HCT116 (cell line): ENCODE measurements at regions of chr18 and their contacts with region 1.

Region 1: DNA sequence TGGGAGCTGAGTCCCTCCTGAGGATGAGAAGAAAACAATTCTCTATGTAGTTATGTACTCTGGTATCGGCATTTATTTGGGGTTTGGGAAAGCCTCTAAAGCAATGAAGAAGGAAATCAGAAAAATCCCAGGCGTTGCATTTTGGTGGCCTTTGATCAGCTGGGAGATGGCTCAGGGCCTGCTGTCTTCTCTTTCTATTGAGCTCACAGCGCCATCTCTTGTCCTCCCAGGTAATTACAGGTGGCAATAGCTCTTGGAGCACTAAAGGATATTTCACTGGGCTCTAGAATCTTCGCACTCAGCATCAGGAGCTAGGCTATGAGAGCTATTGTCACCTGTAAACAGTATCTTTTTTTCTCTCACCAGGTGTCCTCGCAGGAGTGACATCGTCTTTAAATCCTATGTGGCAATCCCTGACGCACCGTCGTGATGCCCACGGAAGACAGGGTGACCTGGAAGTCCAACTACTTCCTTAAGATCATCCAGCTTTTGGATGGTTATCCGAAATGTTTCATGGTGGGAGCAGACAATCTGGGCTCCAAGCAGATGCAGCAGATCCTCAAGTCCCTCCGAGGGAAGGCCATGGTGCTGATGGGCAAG is 76.1 kb upstream of the PMAIP1 start:
- DNase-seq: peak; percentile 67
- ATAC-seq: peak; percentile 97
- H3K4me3 ChIP-seq: no peak overlapping the region
- H3K27ac ChIP-seq: no peak overlapping the region
- H3K4me1 ChIP-seq: no peaks in the 10 kb centered on the region
- H3K27me3 ChIP-seq: no peaks in the 10 kb centered on the region
- CTCF ChIP-seq: peak; percentile 81 to 89 (median 82)
- POLR2A ChIP-seq: no peak
- RAD21 ChIP-seq: peak; percentile 91

Region 2: DNA sequence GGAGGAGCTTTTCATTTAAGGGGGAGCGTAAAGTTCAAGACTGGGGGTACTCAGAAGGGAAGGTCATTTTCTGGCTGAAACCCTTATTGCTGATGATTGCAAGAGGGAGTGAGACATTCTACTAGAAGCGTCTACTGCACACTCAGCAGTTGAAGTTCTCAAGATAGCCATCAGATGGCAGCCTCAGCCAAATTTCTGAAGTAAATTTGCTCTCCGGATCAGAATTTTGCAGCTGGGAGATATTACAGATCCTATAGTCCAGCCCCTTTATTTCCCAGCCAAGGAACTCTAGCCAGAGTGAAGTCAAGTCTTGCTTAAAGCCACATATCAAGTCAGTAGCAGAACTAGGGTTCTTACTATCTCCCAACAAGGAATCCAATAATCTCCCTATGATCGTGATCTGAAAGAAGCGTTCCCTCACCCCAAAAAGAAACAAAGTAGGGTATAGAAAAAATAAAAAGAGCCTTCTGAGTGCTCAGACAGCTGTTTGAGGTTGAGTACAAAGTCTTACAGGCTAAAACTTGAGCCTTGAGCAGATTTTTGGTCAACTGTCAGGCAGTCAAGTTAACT is 574.4 kb before region 1 on chr18:
- CTCF ChIA-PET with region 1: interaction called, 11 read pairs
- POLR2A ChIA-PET with region 1: no interaction called
- RAD21 ChIA-PET with region 1: no interaction called
- intact Hi-C with region 1: loop called (anchors 1 kb)
- DNase-seq: peak; percentile 75
- ATAC-seq: peak; percentile 94
- H3K4me3 ChIP-seq: no peak overlapping the region
- H3K27ac ChIP-seq: no peak overlapping the region
- H3K4me1 ChIP-seq: no peaks in the 10 kb centered on the region
- H3K27me3 ChIP-seq: peaks cover 45% of the 10 kb centered on the region
- CTCF ChIP-seq: peak; percentile 72 to 81 (median 73)
- POLR2A ChIP-seq: no peak
- RAD21 ChIP-seq: peak; percentile 74

Region 3: DNA sequence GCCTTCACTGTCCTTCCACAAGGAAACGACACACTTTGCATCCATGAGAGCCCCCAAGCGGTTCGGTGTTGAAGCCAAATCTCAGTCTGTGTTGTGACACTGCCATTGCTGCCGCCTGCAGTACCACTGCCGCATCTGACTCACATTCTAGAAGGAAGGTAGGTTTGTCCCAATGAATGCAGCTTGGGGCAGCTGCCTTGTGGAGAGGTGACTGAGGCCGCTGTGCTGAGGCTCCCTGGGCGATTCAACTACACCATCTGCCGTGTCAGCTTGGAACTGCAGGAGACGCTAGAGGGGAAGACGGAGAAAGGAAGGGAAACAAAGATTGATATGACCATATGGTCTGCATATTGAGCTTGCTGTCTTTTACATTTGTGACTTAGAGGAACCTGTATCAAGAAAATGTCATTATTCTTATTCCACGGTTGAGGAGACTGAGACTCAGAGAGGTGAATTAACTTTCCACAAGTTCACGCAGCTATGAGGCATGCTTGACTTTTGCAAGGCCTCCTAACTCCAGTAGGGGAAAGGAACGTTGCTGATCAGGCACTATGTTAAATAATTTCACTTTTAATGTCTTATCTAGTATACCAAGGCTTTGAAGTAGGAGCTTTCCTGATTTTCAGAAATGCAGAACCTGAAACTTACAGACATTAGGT is 421.1 kb before region 1 on chr18:
- CTCF ChIA-PET with region 1: interaction called, 24 read pairs
- POLR2A ChIA-PET with region 1: no interaction called
- RAD21 ChIA-PET with region 1: interaction called in 1 of 2 experiments, 5 read pairs
- intact Hi-C with region 1: no loop called
- DNase-seq: peak; percentile 94
- ATAC-seq: peak; percentile 100
- H3K4me3 ChIP-seq: no peak overlapping the region
- H3K27ac ChIP-seq: no peak overlapping the region
- H3K4me1 ChIP-seq: no peaks in the 10 kb centered on the region
- H3K27me3 ChIP-seq: no peaks in the 10 kb centered on the region
- CTCF ChIP-seq: peak; percentile 90 to 99 (median 99)
- POLR2A ChIP-seq: no peak
- RAD21 ChIP-seq: peak; percentile 100

Region 4: DNA sequence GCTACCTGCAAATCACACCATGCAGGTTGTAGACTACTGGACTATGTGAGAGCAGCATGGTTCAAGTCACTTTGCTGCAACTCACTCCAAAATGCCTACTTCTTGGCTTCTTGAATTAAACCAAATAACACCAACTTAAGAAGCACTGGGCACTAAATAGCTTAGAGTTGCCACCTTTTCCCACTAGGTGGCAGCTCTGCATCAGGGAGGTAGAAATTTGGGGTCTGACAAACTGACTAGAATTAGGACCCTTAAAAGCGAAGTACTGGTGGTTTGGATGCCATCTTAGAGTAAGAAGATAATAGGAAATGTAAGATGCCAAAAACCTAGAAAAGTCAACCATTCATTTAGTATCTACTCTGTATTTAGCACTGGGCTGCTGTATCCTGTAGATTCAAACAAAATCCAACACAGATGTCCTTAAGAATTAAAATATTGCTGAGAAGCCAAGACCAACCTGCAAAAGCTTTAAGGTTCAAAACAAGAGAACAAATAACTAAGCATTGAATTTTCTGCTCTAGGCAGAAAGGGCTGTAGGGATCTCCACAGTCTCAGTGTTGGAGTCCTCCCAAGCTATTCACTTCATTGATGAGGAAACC is 192.0 kb before region 1 on chr18:
- CTCF ChIA-PET with region 1: interaction called, 145 read pairs
- POLR2A ChIA-PET with region 1: interaction called, 7 read pairs
- RAD21 ChIA-PET with region 1: interaction called, 19 to 28 read pairs
- intact Hi-C with region 1: loop called (anchors 1 kb)
- DNase-seq: peak; percentile 24
- ATAC-seq: peak; percentile 69
- H3K4me3 ChIP-seq: no peak overlapping the region
- H3K27ac ChIP-seq: no peak overlapping the region
- H3K4me1 ChIP-seq: no peaks in the 10 kb centered on the region
- H3K27me3 ChIP-seq: peaks cover 30% of the 10 kb centered on the region; the same call in 1 of the 2 replicates
- CTCF ChIP-seq: peak; percentile 53 to 86 (median 72); a peak in 5 of 6 replicates
- POLR2A ChIP-seq: no peak
- RAD21 ChIP-seq: peak; percentile 74

Region 5: GRCh38 chr18:59783138-59783537 is 40.6 kb before region 1 on chr18:
- CTCF ChIA-PET with region 1: interaction called, 31 read pairs
- POLR2A ChIA-PET with region 1: interaction called, 6 read pairs
- RAD21 ChIA-PET with region 1: interaction called, 7 to 8 read pairs
- intact Hi-C with region 1: loop called (anchors 2 kb)
- DNase-seq: peak; percentile 85
- ATAC-seq: peak; percentile 96
- H3K4me3 ChIP-seq: peak overlapping the region; percentile 22 to 34; a peak in 3 of 4 replicates
- H3K27ac ChIP-seq: no peak overlapping the region
- H3K4me1 ChIP-seq: peaks cover 11 to 31% of the 10 kb centered on the region in 2 experiments
- H3K27me3 ChIP-seq: no peaks in the 10 kb centered on the region
- CTCF ChIP-seq: peak; percentile 66 to 82 (median 78); a peak in 5 of 6 replicates
- POLR2A ChIP-seq: no peak
- RAD21 ChIP-seq: peak; percentile 79

Region 6: DNA sequence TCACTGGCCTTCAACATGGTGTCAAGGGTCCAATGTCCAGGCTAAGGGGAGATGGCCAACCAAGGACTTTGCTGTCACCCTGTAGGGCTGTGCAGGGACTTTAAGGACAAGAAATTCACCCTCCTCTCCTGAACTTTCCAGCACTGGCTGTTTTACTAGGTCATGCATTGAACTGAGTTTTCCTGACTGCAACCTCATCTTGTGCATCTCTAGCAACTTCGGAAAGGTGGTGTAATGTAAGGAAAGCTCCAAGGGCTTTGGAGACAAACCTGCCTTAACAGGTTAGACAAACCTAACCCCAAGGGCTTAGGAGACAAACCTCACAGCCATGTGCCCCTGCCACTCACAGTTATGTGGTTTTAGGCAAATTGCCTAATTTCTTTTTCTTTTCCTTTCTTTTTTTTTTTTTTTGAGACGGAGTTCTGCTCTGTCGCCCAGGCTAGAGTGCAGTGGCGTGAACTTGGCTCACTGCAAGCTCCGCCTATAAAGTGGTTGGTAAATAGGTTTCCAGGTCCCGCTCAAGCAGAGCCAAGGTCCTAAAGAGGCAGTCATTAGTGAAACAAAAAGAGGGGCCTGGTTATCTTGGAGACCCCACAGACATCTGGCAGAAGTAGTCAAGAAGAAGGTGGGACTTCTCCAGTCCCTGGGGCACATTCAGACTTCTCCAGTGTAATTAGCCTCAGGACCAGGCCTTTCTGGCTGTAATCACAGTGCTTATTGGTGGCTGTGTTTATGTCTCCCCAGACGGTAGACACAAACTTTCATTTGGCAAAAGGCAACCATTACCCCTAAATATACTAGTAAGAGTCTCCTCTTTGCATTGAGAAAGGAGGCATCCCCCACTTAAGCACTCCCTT is 38.5 kb after region 1 on chr18:
- CTCF ChIA-PET with region 1: no interaction called
- POLR2A ChIA-PET with region 1: no interaction called
- RAD21 ChIA-PET with region 1: no interaction called
- intact Hi-C with region 1: no loop called
- DNase-seq: no peak
- ATAC-seq: no peak
- H3K4me3 ChIP-seq: no peak overlapping the region
- H3K27ac ChIP-seq: no peak overlapping the region
- H3K4me1 ChIP-seq: no peaks in the 10 kb centered on the region
- H3K27me3 ChIP-seq: no peaks in the 10 kb centered on the region
- CTCF ChIP-seq: no peak
- POLR2A ChIP-seq: no peak
- RAD21 ChIP-seq: no peak

Region 7: DNA sequence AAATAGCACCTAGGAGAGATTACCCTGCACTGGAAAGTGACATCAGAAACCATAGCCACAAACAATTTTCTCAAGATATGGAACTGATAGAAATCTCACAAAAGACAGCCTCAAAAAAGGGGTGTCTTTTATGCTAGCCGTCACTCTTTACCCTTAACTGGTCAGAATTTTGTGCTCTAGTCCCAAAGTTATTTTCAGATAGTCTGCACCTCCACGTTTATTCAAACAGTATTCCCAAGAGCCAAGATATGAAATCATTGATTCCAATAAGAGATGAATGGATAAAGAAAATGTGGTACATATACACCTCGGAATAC is 52.6 kb after region 1 on chr18:
- CTCF ChIA-PET with region 1: no interaction called
- POLR2A ChIA-PET with region 1: no interaction called
- RAD21 ChIA-PET with region 1: no interaction called
- intact Hi-C with region 1: no loop called
- DNase-seq: no peak
- ATAC-seq: no peak
- H3K4me3 ChIP-seq: no peak overlapping the region
- H3K27ac ChIP-seq: no peak overlapping the region
- H3K4me1 ChIP-seq: peaks cover 12 to 27% of the 10 kb centered on the region in 2 experiments
- H3K27me3 ChIP-seq: no peaks in the 10 kb centered on the region
- CTCF ChIP-seq: no peak
- POLR2A ChIP-seq: no peak
- RAD21 ChIP-seq: no peak